ENCODE measurements at regions of chrX and their contacts with region 1.

Region 1: DNA sequence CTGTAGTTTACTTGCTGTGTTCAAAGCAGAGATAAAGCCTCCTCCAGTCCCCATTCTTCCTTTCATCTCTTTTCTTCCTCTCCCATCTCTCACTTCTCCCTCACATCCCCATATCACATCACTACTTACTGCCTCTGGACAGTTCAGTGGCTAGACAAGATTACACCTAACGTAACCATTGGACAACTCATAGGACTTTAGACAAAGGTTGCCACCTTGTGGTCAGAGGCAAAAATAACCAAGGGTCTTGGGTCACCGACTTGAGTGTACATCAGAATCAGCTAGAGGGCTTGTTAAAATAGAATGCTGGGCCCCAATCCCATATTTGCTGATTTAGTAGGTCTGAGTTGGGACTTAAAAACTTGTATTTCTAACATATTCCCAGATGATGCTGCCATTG is 109.3 kb upstream of the DGKK start:
- DNase-seq: peak; percentile 45
- CTCF ChIP-seq: peak; percentile 73

Region 2: DNA sequence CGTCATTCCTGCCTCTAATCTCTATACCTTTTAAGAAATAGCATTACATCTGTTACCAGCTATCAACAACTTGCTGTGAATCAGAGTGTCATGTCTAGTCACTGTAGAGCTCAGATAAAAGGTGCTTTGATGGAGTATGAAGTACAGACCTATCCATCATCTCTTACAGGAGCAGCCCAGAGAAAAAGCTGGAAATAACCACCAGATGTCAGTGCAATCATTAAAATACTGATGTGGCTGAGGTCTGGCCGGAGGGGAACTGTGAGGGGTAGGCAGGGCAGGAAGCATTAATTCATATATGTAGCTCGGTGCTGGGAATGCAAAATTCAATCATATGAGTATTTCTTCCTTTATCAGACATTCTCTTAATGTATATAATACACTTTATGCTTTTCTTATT is 479.8 kb before region 1 on chrX:
- in situ Hi-C with region 1: loop called (anchors 25 kb)
- DNase-seq: no peak
- CTCF ChIP-seq: peak; percentile 44

Region 3: DNA sequence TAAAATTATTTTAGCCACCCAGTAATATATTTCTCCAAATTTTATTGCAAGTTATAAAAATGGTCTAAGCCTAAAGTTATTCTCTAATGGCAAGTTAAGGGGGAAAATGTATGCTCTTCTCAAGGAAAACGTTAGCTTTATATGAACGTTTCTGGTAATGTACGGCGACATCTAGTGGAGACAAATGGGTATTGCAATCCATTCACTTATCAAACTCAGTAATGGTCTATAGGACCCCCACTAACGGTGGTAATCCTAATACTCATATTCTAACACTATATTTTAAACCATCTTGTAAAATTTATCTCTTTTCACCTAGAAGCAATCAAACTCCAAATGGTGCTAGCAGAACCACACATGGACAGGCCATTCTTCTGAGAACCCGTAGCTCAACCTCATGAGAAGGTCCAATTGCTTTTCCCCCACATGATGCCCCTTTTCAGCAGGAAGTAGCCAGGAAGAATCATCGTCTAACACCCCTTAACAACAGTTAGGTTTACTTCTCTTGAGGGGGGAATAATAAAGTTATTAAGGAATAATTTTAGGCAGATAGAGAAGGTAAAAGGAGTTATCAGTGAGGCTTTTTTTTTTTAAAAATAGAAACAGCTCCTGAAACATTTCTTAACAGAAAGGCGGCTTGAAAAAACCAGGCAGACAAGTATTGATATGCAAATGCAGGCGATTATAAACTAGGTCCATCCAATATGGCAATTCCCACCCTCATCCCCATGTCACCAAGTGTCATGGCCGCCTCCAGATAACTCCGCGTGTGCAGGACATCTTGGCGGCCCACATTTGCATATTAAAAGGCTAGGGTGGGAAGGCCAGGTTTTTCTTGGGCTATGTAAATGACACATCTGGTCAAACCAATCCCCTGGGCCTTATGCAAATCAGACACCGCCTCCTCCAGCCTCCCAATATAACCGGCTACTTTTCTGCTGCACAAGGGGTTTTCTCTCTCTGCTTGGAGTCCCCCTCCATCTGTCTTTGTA is 881.4 kb after region 1 on chrX:
- in situ Hi-C with region 1: no loop called
- DNase-seq: peak; percentile 30
- CTCF ChIP-seq: peak; percentile 87